ENCODE measurements at regions of chr13 and their contacts with region 1.

Region 1: DNA sequence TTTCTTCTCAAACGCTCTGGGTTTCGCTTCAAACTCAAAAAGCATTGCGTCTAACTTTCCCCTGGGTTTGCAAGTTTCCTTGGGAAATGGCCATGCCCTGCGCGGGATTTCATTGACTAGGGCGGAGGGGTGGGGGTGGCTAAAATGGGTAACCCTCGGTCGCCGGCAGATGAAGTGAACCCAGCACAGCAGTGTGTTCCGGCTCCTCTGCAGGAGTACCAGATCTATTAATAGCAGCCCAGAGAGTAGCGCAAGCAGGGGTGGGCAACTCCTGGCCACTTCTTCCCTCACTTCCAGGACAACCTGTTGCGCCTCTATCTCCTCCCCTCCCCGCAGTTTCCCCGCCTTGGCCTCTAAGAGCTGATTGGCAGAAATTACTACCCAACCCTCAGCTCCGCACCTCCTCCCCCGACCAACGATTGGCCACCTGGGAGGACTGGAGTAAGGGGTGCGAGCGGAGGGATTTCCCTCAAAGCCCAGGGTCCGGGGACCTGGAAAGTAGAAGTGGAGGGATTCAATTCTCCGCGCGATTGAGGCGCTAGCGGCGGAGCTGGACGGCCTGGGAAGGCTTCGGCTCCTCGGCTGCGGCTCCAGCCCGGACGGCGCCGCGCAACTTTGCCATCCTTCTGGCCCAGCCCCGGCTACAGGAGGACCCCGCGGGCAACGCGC is at the start of gene FREM2:
- DNase-seq: peak in 8 of 10 donors; percentile 25 to 91 (median 52)

Region 2: DNA sequence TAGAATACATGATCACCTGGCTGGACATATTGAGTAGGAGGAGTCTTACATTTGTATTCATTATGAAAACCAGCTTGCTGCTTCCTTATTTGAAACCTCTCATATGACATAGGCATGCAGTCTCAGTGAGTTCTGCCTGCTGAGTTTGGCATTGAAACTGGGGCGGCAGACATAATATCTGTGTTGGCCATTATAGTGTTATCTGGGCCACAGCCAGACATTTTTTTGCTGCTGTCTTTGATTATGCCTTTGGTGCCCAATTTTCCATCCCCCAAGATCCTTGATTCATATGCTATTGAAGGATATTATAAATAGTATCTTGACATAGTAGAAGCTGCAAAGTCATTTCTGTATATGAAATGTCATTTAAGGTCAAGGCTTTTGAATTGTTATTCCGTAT is 16.0 kb after region 1 on chr13:
- intact Hi-C with region 1: no loop called
- DNase-seq: no peak

Region 3: GRCh38 chr13:38763439-38764381 is 77.0 kb after region 1 on chr13:
- intact Hi-C with region 1: loop called (anchors 1 kb)
- DNase-seq: peak in 5 of 10 donors; percentile 8 to 59 (median 35)

Region 4: GRCh38 chr13:38872693-38873092 is 186.0 kb after region 1 on chr13:
- intact Hi-C with region 1: loop called (anchors 2 kb)
- DNase-seq: peak in 8 of 10 donors; percentile 16 to 92 (median 53)

Region 5: GRCh38 chr13:38914070-38914469 is 227.4 kb after region 1 on chr13:
- intact Hi-C with region 1: loop called (anchors 1 kb)
- DNase-seq: no peak

Region 6: DNA sequence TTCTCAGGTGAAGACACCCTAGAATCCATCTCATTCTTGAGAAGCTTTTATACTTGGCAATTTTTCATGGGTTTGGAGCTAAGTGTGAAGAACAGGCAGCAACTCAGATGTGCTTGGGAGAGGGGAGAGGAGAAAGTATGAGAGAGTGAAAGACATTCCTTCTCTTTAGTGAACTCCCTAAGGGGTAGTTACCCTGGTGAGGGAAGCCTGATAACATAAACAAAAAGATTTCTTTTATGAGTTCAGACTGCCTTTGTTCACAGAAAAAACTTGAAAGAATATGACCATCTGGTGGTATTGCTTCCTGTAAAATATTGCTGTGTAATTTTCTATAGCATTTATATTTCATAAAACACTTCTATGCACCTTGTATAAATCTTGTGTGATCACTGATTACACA is 304.0 kb after region 1 on chr13 and contains the start of gene STOML3:
- intact Hi-C with region 1: no loop called
- DNase-seq: no peak